ENCODE measurements at regions of chr1 and their contacts with region 1.

Region 1: DNA sequence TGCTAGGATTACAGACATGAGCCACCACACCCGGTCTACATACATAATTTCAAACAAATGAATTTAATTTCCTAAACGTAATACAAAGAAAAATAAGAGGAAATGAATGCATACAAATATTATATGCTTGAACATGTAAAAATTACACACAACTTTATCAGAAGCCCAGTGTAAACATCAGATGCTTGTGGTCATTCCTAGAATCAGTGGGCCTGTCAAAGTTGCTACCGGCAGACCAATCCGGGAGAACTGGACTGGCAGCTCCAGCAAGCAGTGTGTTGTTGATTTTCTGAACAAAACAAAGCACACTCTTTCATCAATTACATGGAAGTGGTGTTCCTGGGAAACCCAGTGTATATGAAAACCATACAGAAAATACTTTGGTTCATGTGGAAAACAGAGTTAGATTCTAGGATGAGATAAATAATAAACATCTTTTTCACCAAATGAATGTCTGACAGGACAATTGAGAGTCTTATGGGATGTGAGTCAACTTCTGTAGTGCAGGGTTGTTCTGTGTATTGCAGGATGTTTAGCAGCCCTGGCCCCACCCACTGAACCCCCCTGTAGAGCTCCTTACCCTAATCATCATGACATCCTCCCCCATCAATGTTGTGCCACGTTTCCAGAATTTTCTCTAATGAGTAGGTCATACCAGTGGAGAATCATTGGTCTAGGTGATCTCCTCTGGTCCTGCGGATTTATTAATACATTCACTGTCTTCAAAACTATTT is 33.8 kb downstream of the MFSD2A start:
- DNase-seq: no peak
- ATAC-seq: no peak
- H3K4me3 Mint-ChIP-seq: no peak overlapping the region
- H3K27ac Mint-ChIP-seq: no peak overlapping the region
- H3K4me1 Mint-ChIP-seq: peaks cover 2% of the 10 kb centered on the region
- H3K27me3 Mint-ChIP-seq: no peaks in the 10 kb centered on the region
- CTCF ChIP-seq: no peak

Region 2: DNA sequence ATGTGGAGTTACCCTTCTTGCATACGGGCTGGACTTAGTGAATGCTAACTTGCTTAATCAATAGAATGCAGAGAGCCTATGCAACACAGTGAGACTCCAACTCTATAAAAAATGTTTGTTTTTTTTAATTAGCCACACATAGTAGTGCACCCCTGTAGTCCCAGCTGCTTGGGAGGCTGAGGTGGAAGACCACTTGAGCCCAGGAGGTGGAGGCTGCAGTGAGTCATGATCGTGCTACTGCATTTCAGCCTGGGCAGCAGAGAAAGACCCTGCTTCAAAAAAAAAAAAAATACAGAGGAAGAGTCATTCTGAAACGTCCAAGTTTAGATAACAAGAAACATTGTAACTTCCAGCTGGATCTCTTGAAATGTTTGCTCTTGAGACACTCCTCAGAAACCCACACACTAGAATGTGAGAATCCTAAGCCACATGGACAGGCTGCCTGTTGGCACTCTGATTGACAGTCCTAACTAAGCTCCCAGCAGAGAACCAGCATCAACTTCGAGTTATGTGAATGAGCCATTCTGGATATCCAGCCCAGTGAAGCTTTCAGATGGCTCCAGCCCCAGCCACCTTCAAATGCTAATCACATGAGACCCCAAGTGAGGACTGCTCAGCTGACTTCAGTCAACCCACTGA is 31.8 kb after region 1 on chr1:
- CTCF ChIA-PET with region 1: interaction called, 3 read pairs
- POLR2A ChIA-PET with region 1: no interaction called
- intact Hi-C with region 1: loop called (anchors 5 kb)
- DNase-seq: no peak
- ATAC-seq: no peak
- H3K4me3 Mint-ChIP-seq: no peak overlapping the region
- H3K27ac Mint-ChIP-seq: no peak overlapping the region
- H3K4me1 Mint-ChIP-seq: peaks cover 22% of the 10 kb centered on the region
- H3K27me3 Mint-ChIP-seq: no peaks in the 10 kb centered on the region
- CTCF ChIP-seq: no peak

Measured in activated B cell treated with CpG ODN at 0.5 μM for 24 hours (primary cell).